T-cell (primary cell): ENCODE measurements at regions of chr9 and their contacts with region 1.

Region 1: GRCh38 chr9:18255158-18255629 is 218.8 kb upstream of the ADAMTSL1 start:
- DNase-seq: peak; percentile 12 to 81 (median 59)
- ATAC-seq: peak; percentile 61 to 76 (median 63)
- H3K4me3 ChIP-seq: no peak overlapping the region
- H3K4me3 Mint-ChIP-seq: no peak overlapping the region
- H3K27ac ChIP-seq: no peak overlapping the region
- H3K27ac Mint-ChIP-seq: no peak overlapping the region
- H3K4me1 ChIP-seq: no peaks in the 10 kb centered on the region
- H3K4me1 Mint-ChIP-seq: peaks cover 0 to 6% (median 0%) of the 10 kb centered on the region in 3 donors
- H3K27me3 ChIP-seq: peaks cover 0 to 2% of the 10 kb centered on the region in 2 experiments
- H3K27me3 Mint-ChIP-seq: peaks cover 6 to 9% of the 10 kb centered on the region in 2 donors

Region 2: DNA sequence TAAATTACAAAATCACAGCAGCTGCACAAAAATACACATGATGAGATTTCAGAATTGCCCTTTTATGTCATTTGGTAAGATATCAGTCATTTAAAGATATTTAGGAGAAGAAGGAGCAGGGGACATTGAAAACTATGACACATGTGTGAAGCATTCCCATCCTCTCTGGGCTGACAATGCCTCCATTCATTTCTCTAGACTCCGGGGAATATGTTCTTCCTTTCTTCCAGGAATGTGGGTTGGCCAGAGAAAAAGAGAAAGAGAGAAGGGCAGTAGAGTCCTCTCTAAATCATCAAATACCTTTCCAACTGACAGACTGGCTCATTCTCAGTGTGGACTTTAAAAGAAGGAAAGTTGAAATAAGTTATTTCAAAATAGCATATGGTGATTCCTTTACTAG is 13.2 kb after region 1 on chr9:
- CTCF ChIA-PET with region 1: interaction called, 5 to 12 read pairs
- POLR2A ChIA-PET with region 1: no interaction called
- DNase-seq: no peak
- ATAC-seq: no peak
- H3K4me3 ChIP-seq: no peak overlapping the region
- H3K4me3 Mint-ChIP-seq: no peak overlapping the region
- H3K27ac ChIP-seq: no peak overlapping the region
- H3K27ac Mint-ChIP-seq: no peak overlapping the region
- H3K4me1 ChIP-seq: no peaks in the 10 kb centered on the region
- H3K4me1 Mint-ChIP-seq: no peaks in the 10 kb centered on the region
- H3K27me3 ChIP-seq: no peaks in the 10 kb centered on the region
- H3K27me3 Mint-ChIP-seq: peaks cover 0 to 3% of the 10 kb centered on the region in 2 donors

Region 3: GRCh38 chr9:18343784-18344183 is 88.6 kb after region 1 on chr9:
- CTCF ChIA-PET with region 1: no interaction called
- POLR2A ChIA-PET with region 1: no interaction called
- DNase-seq: no peak
- ATAC-seq: no peak
- H3K4me3 ChIP-seq: no peak overlapping the region
- H3K4me3 Mint-ChIP-seq: no peak overlapping the region
- H3K27ac ChIP-seq: no peak overlapping the region
- H3K27ac Mint-ChIP-seq: no peak overlapping the region
- H3K4me1 ChIP-seq: no peaks in the 10 kb centered on the region
- H3K4me1 Mint-ChIP-seq: no peaks in the 10 kb centered on the region
- H3K27me3 ChIP-seq: peaks cover 0 to 3% of the 10 kb centered on the region in 2 experiments
- H3K27me3 Mint-ChIP-seq: peaks cover 0 to 3% of the 10 kb centered on the region in 2 donors

Region 4: DNA sequence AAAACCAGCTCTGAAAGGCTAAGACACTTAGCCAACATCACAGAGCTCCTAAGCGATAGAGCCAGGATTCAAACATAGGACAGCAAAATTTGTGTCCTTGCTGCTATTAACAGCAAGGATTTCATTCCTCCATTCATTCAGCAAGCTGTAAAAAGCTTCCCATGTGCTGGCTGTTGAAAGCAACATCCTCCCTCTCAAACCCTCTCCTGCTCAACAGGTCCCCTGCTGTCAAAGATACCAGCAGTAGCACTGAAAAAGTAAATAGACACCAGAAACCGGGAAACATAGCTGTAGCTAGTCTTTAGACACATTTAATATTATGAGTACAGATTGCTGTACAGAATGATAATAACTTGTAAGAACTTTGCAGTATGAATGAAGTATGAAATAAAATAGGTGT is 166.2 kb after region 1 on chr9:
- CTCF ChIA-PET with region 1: no interaction called
- POLR2A ChIA-PET with region 1: no interaction called
- DNase-seq: no peak
- ATAC-seq: no peak
- H3K4me3 ChIP-seq: no peak overlapping the region
- H3K4me3 Mint-ChIP-seq: no peak overlapping the region
- H3K27ac ChIP-seq: no peak overlapping the region
- H3K27ac Mint-ChIP-seq: no peak overlapping the region
- H3K4me1 ChIP-seq: no peaks in the 10 kb centered on the region
- H3K4me1 Mint-ChIP-seq: no peaks in the 10 kb centered on the region
- H3K27me3 ChIP-seq: no peaks in the 10 kb centered on the region
- H3K27me3 Mint-ChIP-seq: peaks cover 1 to 4% of the 10 kb centered on the region in 2 donors

Region 5: DNA sequence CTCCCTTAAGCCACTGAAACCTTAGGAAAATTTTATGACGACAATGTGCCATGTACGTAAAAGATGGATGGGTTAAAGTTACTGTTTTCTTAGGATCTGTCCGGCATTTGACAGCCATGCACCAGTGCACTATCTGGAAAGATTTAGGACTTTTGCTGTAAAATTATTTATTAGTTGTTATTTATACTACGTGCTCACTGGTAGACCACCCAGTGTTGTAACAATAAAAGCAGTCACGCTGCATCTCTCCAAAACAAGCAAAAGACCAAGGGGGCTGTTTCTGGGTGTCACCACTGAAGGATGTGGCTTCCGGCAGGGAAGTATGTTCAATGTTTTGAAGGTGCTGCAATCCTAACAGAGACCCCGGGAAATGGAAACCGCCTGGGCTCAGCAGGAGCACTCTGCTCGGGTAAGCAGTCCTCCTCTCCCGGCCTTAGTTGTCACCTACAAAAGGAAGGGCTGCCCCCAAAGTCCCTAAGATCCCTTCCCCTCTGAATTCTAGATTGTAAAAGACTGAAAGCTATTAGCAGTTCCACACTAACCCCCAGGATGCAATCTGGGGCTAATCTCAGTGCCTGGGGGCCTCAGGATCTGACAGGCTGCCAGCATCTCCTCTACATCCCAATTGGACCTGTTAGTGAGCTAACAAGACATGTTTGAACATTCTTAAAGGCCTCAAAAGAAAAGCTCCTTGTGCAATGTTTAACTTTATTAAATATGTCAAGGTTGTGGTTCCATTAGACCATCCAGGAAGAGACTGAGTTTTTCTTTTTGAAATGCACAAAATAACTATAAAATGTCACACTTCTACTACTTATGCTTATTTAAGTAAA is 739.3 kb after region 1 on chr9:
- CTCF ChIA-PET with region 1: no interaction called
- POLR2A ChIA-PET with region 1: no interaction called
- DNase-seq: no peak
- ATAC-seq: no peak
- H3K4me3 ChIP-seq: no peak overlapping the region
- H3K4me3 Mint-ChIP-seq: no peak overlapping the region
- H3K27ac ChIP-seq: no peak overlapping the region
- H3K27ac Mint-ChIP-seq: no peak overlapping the region
- H3K4me1 ChIP-seq: no peaks in the 10 kb centered on the region
- H3K4me1 Mint-ChIP-seq: no peaks in the 10 kb centered on the region
- H3K27me3 ChIP-seq: peaks cover 0 to 6% of the 10 kb centered on the region in 2 experiments
- H3K27me3 Mint-ChIP-seq: peaks cover 0 to 7% of the 10 kb centered on the region in 2 donors

Region 6: DNA sequence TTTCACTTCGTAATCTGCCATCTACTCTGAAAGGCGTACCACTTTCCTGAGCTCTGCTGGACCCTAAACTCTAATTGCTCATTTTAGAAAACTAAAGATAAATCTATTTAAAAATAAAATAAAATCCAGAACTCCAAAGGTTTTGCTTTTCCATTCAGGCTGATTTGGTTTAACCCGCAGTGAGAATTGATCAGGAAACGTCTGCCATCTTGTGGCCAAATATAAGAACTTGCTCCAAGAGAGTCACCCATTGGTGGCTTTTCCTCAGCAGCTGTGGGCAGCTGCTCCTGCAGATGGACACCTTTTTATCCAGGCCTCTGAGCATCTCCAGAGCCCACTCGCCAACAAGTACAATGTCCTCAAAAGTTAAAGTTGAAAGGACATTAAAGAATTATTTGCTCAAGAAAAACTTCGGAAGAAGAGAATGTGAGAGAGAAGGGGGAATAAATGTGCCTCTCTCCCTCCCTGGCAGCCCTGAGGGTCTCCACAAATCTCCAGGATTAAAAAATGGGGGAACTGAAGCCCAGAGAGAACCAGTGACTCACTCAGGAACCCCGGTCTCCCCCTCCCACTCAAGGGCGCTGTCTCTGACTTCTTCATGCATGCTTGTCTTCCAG is 773.7 kb after region 1 on chr9:
- CTCF ChIA-PET with region 1: interaction called, 6 to 31 read pairs
- POLR2A ChIA-PET with region 1: no interaction called
- DNase-seq: peak in 5 of 35 experiments; percentile 2 to 59 (median 6)
- ATAC-seq: peak in 3 of 4 experiments; percentile 43 to 59 (median 58)
- H3K4me3 ChIP-seq: no peak overlapping the region
- H3K4me3 Mint-ChIP-seq: no peak overlapping the region
- H3K27ac ChIP-seq: no peak overlapping the region
- H3K27ac Mint-ChIP-seq: no peak overlapping the region
- H3K4me1 ChIP-seq: no peaks in the 10 kb centered on the region
- H3K4me1 Mint-ChIP-seq: peaks cover 0 to 2% (median 0%) of the 10 kb centered on the region in 3 donors
- H3K27me3 ChIP-seq: peaks cover 0 to 18% of the 10 kb centered on the region in 2 experiments
- H3K27me3 Mint-ChIP-seq: peaks cover 8 to 10% of the 10 kb centered on the region in 2 donors